ENCODE measurements at regions of chrX and their contacts with region 1.

Region 1: GRCh38 chrX:54639346-54640102 is 109.5 kb downstream of the GNL3L start:
- DNase-seq: peak; percentile 73 to 95 (median 89)
- ATAC-seq: peak; percentile 93
- H3K4me3 ChIP-seq: peak overlapping the region; percentile 64
- H3K4me3 Mint-ChIP-seq: peak overlapping the region; percentile 74 to 98 (median 94)
- H3K27ac ChIP-seq: peak overlapping the region; percentile 98
- H3K27ac Mint-ChIP-seq: peak overlapping the region; percentile 96 to 100 (median 99)
- H3K4me1 ChIP-seq: peaks cover 4% of the 10 kb centered on the region in 2 donors
- H3K4me1 Mint-ChIP-seq: peaks cover 0 to 16% (median 10%) of the 10 kb centered on the region in 7 donors
- H3K27me3 ChIP-seq: no peaks in the 10 kb centered on the region
- H3K27me3 Mint-ChIP-seq: no peaks in the 10 kb centered on the region

Region 2: GRCh38 chrX:53081925-53082772 is 1557.4 kb before region 1 on chrX and contains the start of gene TSPYL2:
- CTCF ChIA-PET with region 1: no interaction called
- POLR2A ChIA-PET with region 1: no interaction called
- intact Hi-C with region 1: loop called in 1 of 2 experiments (anchors 5 kb)
- DNase-seq: peak; percentile 83 to 96 (median 93)
- ATAC-seq: peak; percentile 91
- H3K4me3 ChIP-seq: peak within 1 kb of the TSS; percentile 64
- H3K4me3 Mint-ChIP-seq: peak within 1 kb of the TSS; percentile 87 to 98 (median 92)
- H3K27ac ChIP-seq: peak within 1 kb of the TSS; percentile 85
- H3K27ac Mint-ChIP-seq: peak within 1 kb of the TSS; percentile 96 to 99 (median 97)
- H3K4me1 ChIP-seq: peaks cover 0 to 12% of the 10 kb centered on the region in 2 donors
- H3K4me1 Mint-ChIP-seq: peaks cover 25 to 47% (median 38%) of the 10 kb centered on the region in 7 donors
- H3K27me3 ChIP-seq: no peaks in the 10 kb centered on the region
- H3K27me3 Mint-ChIP-seq: peaks cover 0 to 3% (median 0%) of the 10 kb centered on the region in 5 donors
- total RNA-seq, gene TSPYL2: 23.4 to 239 (median 166) TPM

Region 3: DNA sequence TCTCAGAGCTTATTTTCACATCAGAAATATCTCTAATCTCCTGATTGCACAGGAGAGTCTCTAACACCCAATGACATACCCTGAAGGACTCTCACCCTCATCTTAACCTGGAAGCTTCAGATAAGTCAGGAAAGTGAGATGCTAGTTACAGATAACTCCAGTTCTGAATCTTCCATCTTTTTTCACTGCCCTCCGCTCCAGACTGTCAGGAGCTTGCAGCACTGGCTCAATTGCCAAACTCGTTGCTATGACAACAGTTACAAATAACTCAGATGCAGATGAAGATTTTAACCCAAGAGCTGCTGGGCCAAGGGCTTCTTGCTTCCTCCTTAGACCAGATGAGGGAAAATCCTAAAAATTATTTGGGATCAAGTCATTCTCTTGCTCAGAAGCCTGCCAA is 844.0 kb before region 1 on chrX:
- CTCF ChIA-PET with region 1: no interaction called
- POLR2A ChIA-PET with region 1: no interaction called
- intact Hi-C with region 1: no loop called
- DNase-seq: no peak
- ATAC-seq: no peak
- H3K4me3 ChIP-seq: no peak overlapping the region
- H3K4me3 Mint-ChIP-seq: no peak overlapping the region
- H3K27ac ChIP-seq: no peak overlapping the region
- H3K27ac Mint-ChIP-seq: no peak overlapping the region
- H3K4me1 ChIP-seq: no peaks in the 10 kb centered on the region
- H3K4me1 Mint-ChIP-seq: peaks cover 0 to 15% (median 5%) of the 10 kb centered on the region in 7 donors
- H3K27me3 ChIP-seq: no peaks in the 10 kb centered on the region
- H3K27me3 Mint-ChIP-seq: no peaks in the 10 kb centered on the region

Region 4: GRCh38 chrX:54208531-54208930 is 431.0 kb before region 1 on chrX:
- CTCF ChIA-PET with region 1: no interaction called
- POLR2A ChIA-PET with region 1: no interaction called
- intact Hi-C with region 1: no loop called
- DNase-seq: no peak
- ATAC-seq: no peak
- H3K4me3 ChIP-seq: no peak overlapping the region
- H3K4me3 Mint-ChIP-seq: no peak overlapping the region
- H3K27ac ChIP-seq: no peak overlapping the region
- H3K27ac Mint-ChIP-seq: no peak overlapping the region
- H3K4me1 ChIP-seq: no peaks in the 10 kb centered on the region
- H3K4me1 Mint-ChIP-seq: no peaks in the 10 kb centered on the region
- H3K27me3 ChIP-seq: no peaks in the 10 kb centered on the region
- H3K27me3 Mint-ChIP-seq: no peaks in the 10 kb centered on the region

Region 5: DNA sequence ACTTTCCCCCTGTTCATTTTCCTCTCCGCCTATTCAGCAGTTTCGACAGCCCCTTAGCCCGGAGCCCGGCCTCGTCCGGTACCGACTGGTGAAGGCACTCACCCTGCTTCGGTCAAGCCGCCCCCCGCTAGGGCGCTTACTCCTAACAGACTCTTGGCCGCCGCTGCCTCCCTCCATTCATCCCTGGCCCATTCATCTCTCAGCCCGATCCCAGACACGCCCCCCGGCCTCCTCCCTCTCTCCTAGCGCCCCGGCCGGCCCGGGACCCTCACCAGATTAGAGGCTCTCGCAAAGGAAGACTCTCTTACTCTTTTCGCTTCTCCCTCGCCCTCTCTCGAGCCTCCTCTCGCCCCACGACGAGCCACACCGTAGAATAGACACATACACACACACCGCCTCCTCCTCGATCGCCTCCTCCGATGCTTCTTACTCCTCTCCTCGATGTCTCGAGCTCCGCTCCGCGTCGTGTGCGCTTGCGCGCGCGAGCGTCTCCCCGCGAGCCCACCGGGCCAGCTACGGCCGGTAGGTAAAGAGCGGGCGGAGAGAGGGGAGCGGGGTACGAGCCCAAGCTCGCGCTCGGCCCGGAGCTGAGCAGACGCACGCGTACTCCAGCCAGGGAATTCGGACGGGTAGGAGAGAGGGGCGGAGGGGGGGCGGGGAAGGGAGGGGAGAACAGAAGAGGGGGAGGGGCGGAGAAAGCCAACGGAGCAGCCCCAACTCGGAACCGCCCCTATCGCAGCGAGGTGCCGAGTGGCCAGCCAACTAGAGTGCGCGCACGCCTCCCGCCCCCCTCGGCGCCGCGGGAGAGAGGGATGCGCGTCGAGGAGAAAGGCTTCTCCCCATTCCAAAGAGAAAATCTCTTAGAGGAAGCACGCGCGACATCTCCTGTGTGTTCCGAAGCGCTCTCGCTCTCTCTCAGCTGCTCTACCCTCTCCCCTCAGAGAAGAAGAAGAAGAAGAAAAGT is 281.8 kb before region 1 on chrX and contains the start of gene WNK3:
- CTCF ChIA-PET with region 1: no interaction called
- POLR2A ChIA-PET with region 1: no interaction called
- intact Hi-C with region 1: loop called in 1 of 2 experiments (anchors 2 kb)
- DNase-seq: peak; percentile 9 to 48 (median 35)
- ATAC-seq: peak; percentile 72
- H3K4me3 ChIP-seq: peak within 1 kb of the TSS; percentile 52
- H3K4me3 Mint-ChIP-seq: peak within 1 kb of the TSS; percentile 75 to 92 (median 88)
- H3K27ac ChIP-seq: no peak within 1 kb of the TSS
- H3K27ac Mint-ChIP-seq: peak within 1 kb of the TSS; percentile 22 to 85 (median 58)
- H3K4me1 ChIP-seq: no peaks in the 10 kb centered on the region
- H3K4me1 Mint-ChIP-seq: peaks cover 7 to 25% (median 20%) of the 10 kb centered on the region in 7 donors
- H3K27me3 ChIP-seq: no peaks in the 10 kb centered on the region
- H3K27me3 Mint-ChIP-seq: peaks cover 0 to 52% (median 21%) of the 10 kb centered on the region in 5 donors
- total RNA-seq, gene WNK3: 0.15 to 0.95 (median 0.67) TPM

Region 6: GRCh38 chrX:54570332-54570731 is 69.2 kb before region 1 on chrX:
- CTCF ChIA-PET with region 1: no interaction called
- POLR2A ChIA-PET with region 1: interaction called, 3 read pairs
- intact Hi-C with region 1: loop called in 1 of 2 experiments (anchors 5 kb)
- DNase-seq: no peak
- ATAC-seq: no peak
- H3K4me3 ChIP-seq: no peak overlapping the region
- H3K4me3 Mint-ChIP-seq: no peak overlapping the region
- H3K27ac ChIP-seq: no peak overlapping the region
- H3K27ac Mint-ChIP-seq: no peak overlapping the region
- H3K4me1 ChIP-seq: no peaks in the 10 kb centered on the region
- H3K4me1 Mint-ChIP-seq: peaks cover 0 to 1% (median 0%) of the 10 kb centered on the region in 7 donors
- H3K27me3 ChIP-seq: no peaks in the 10 kb centered on the region
- H3K27me3 Mint-ChIP-seq: no peaks in the 10 kb centered on the region

Region 7: DNA sequence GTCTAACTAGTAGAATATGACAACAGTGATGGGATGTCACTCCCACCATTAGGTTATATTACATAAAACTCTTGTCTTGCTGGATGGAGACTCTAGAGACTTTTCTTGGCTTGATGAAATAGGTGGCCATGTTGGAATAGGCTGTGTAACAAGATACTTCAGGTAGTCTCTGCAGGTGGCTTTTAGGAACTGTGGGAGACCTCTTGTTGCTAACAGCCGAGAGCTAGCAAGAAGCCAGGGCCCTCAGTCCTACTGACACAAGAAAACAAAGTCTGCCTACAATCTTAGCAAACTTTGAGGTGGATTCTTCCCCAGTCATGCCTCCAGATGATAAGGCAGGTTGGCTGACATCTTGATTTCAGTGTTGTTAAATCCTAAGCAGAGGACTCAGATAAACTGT is 37.0 kb before region 1 on chrX:
- CTCF ChIA-PET with region 1: no interaction called
- POLR2A ChIA-PET with region 1: no interaction called
- intact Hi-C with region 1: no loop called
- DNase-seq: no peak
- ATAC-seq: no peak
- H3K4me3 ChIP-seq: no peak overlapping the region
- H3K4me3 Mint-ChIP-seq: no peak overlapping the region
- H3K27ac ChIP-seq: no peak overlapping the region
- H3K27ac Mint-ChIP-seq: no peak overlapping the region
- H3K4me1 ChIP-seq: no peaks in the 10 kb centered on the region
- H3K4me1 Mint-ChIP-seq: peaks cover 0 to 2% (median 0%) of the 10 kb centered on the region in 7 donors
- H3K27me3 ChIP-seq: no peaks in the 10 kb centered on the region
- H3K27me3 Mint-ChIP-seq: no peaks in the 10 kb centered on the region

Region 8: GRCh38 chrX:54683655-54684054 is 44.1 kb after region 1 on chrX:
- CTCF ChIA-PET with region 1: no interaction called
- POLR2A ChIA-PET with region 1: no interaction called
- intact Hi-C with region 1: no loop called
- DNase-seq: no peak
- ATAC-seq: no peak
- H3K4me3 ChIP-seq: no peak overlapping the region
- H3K4me3 Mint-ChIP-seq: no peak overlapping the region
- H3K27ac ChIP-seq: no peak overlapping the region
- H3K27ac Mint-ChIP-seq: no peak overlapping the region
- H3K4me1 ChIP-seq: no peaks in the 10 kb centered on the region
- H3K4me1 Mint-ChIP-seq: no peaks in the 10 kb centered on the region
- H3K27me3 ChIP-seq: no peaks in the 10 kb centered on the region
- H3K27me3 Mint-ChIP-seq: peaks cover 0 to 6% (median 0%) of the 10 kb centered on the region in 5 donors

Region 9: GRCh38 chrX:54808605-54809483 is 169.3 kb after region 1 on chrX:
- CTCF ChIA-PET with region 1: no interaction called
- POLR2A ChIA-PET with region 1: interaction called, 16 read pairs
- intact Hi-C with region 1: loop called (anchors 1 kb)
- DNase-seq: peak; percentile 63 to 90 (median 84)
- ATAC-seq: peak; percentile 84
- H3K4me3 ChIP-seq: peak overlapping the region; percentile 93
- H3K4me3 Mint-ChIP-seq: peak overlapping the region; percentile 90 to 99 (median 96)
- H3K27ac ChIP-seq: peak overlapping the region; percentile 89
- H3K27ac Mint-ChIP-seq: peak overlapping the region; percentile 93 to 98 (median 96)
- H3K4me1 ChIP-seq: no peaks in the 10 kb centered on the region
- H3K4me1 Mint-ChIP-seq: peaks cover 5 to 28% (median 19%) of the 10 kb centered on the region in 7 donors
- H3K27me3 ChIP-seq: no peaks in the 10 kb centered on the region
- H3K27me3 Mint-ChIP-seq: peaks cover 0 to 25% (median 0%) of the 10 kb centered on the region in 5 donors

Region 10: DNA sequence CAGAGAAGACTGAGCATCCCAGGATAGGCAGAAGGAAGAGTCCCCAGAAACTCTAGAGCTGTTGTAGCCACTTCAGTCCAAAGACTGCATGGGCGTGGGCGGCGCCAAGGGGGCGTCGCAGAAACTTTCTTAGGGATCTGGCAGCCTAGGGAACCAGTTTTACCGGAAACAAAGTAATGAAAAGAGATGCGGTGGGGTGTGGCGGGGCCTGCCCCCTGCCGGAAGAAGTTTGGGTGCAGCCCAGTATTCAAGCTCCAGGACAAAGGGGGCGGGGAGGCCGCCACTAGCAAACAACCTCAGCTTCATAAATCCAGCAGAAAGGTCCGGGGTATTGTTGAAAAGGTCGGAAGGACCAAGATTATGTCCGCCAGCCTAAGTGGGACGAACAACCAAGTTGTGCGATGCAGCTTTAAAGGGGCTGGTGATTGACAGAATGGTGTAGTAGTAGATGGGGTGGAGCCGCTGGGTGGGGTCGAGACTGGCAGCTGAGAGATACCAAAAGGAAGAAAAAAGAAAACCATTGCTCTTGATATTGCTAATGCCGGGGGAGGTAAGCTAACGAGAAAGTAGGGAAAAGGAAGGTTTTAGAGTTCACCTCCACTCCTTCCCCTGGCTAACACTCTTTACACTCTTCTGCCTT is 1268.6 kb after region 1 on chrX:
- CTCF ChIA-PET with region 1: no interaction called
- POLR2A ChIA-PET with region 1: no interaction called
- intact Hi-C with region 1: loop called in 1 of 2 experiments (anchors 5 kb)
- DNase-seq: peak; percentile 7 to 50 (median 44)
- ATAC-seq: peak; percentile 80
- H3K4me3 ChIP-seq: peak overlapping the region; percentile 83
- H3K4me3 Mint-ChIP-seq: peak overlapping the region; percentile 80 to 97 (median 94)
- H3K27ac ChIP-seq: peak overlapping the region; percentile 61
- H3K27ac Mint-ChIP-seq: peak overlapping the region; percentile 53 to 93 (median 85)
- H3K4me1 ChIP-seq: no peaks in the 10 kb centered on the region
- H3K4me1 Mint-ChIP-seq: peaks cover 6 to 32% (median 16%) of the 10 kb centered on the region in 7 donors
- H3K27me3 ChIP-seq: no peaks in the 10 kb centered on the region
- H3K27me3 Mint-ChIP-seq: no peaks in the 10 kb centered on the region